PC-9 (cell line): ENCODE measurements at regions of chr19 and their contacts with region 1.

Region 1: DNA sequence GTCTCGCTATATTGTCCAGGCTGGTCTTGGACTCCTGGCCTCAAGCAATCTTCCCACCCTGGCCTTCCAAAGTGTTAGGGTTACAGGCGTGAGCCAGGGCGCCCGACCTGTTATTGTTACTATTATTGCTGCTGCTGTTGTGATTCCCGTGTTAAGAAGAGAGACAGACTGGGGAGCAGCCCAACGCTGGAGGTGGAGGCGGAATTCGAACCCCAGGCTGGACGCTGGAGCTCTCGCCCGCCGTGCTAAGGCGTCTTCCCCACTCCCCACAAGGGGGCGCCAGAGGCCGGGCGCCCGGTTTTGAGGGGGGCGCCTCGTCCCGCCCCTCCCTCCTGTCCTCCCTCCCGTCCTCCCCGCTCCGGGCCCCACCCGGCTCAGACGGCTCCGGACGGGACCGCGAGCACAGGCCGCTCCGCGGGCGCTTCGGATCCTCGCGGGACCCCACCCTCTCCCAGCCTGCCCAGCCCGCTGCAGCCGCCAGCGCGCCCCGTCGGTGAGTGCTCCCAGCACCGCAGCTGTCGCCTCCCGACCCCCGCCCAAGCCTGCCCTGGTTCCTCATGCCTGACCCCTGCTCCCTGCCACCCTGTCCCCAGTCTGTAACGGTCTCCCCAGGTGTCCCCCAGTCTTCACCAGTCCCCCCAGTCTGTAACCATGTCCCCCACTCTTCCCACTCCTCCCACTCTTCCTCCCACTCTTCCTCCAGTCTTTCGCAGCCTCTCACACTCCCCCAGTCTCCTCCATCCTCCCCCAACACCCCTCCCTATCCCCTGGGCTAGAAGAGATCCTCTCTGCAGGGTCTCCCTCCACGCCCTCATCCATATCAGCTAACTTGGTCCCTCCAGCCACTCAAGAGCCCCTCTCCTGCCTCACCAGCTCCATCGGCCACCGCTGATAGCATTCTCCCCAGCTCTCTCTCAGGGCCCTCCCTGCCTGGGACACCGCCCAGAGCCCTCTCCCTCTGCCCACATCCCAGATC is at the start of gene EHD2:
- DNase-seq: peak in 1 of 2 experiments; percentile 73
- H3K4me3 ChIP-seq: no peak within 1 kb of the TSS
- H3K27ac ChIP-seq: no peak within 1 kb of the TSS
- H3K4me1 ChIP-seq: 0 out of 2 replicates have a peak, but pooled peaks cover 5% of the 10 kb centered on the region
- H3K27me3 ChIP-seq: no peaks in the 10 kb centered on the region
- CTCF ChIP-seq: peak; percentile 94
- total RNA-seq, gene EHD2: 25.6 and 36.6 TPM in 2 replicates

Region 2: GRCh38 chr19:46115396-46116106 is 1597.8 kb before region 1 on chr19:
- CTCF ChIA-PET with region 1: interaction called, 26 read pairs
- POLR2A ChIA-PET with region 1: no interaction called
- intact Hi-C with region 1: no loop called
- DNase-seq: peak; percentile 57 to 87
- H3K4me3 ChIP-seq: no peak overlapping the region; the same call in 1 of the 2 replicates
- H3K27ac ChIP-seq: peak overlapping the region; percentile 70
- H3K4me1 ChIP-seq: peaks cover 46% of the 10 kb centered on the region
- H3K27me3 ChIP-seq: no peaks in the 10 kb centered on the region
- CTCF ChIP-seq: no peak

Region 3: DNA sequence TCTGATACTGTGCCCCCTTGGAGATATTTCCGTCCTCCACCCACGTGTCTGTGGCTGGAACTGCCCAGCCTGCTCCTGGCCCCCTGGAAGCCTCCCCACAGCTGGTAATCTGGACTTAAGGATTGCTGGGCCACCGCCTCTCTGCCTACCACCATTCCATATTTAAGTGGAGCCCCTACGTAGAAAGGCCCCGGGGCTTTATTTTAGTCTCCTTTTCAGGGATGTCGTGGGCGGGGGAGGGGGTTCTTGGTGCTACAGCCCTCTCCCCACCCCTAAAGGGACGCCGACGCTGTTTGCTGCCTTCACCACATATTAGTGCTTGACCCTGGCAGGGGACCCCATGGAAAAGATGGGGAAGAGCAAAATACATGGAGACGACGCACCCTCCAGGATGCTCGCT is 29.3 kb after region 1 on chr19:
- CTCF ChIA-PET with region 1: interaction called, 6 read pairs
- POLR2A ChIA-PET with region 1: no interaction called
- intact Hi-C with region 1: loop called (anchors 1 kb)
- DNase-seq: no peak
- H3K4me3 ChIP-seq: no peak overlapping the region
- H3K27ac ChIP-seq: peak overlapping the region; percentile 73
- H3K4me1 ChIP-seq: peaks cover 29% of the 10 kb centered on the region
- H3K27me3 ChIP-seq: no peaks in the 10 kb centered on the region
- CTCF ChIP-seq: no peak